Aorta (tissue), 5 donors: ENCODE measurements at regions of chr10 and their contacts with region 1.

Region 1: GRCh38 chr10:125822878-125823662 is at the starts of genes BCCIP and UROS:
- DNase-seq: peak; percentile 95 to 96
- ATAC-seq: peak; percentile 97
- H3K4me3 ChIP-seq: peak within 1 kb of the TSS; percentile 63 to 91
- H3K27ac ChIP-seq: peak within 1 kb of the TSS in 1 of 2 donors; percentile 30
- H3K4me1 ChIP-seq: peaks cover 3 to 16% of the 10 kb centered on the region in 2 donors
- H3K27me3 ChIP-seq: no peaks in the 10 kb centered on the region
- total RNA-seq, gene BCCIP: 30.5 to 36.1 TPM
- total RNA-seq, gene UROS: 23.2 to 29.9 TPM

Region 2: GRCh38 chr10:125629763-125630376 is 193.2 kb before region 1 on chr10:
- intact Hi-C with region 1: no loop called
- DNase-seq: no peak
- ATAC-seq: no peak
- H3K4me3 ChIP-seq: no peak overlapping the region
- H3K27ac ChIP-seq: no peak overlapping the region
- H3K4me1 ChIP-seq: no peaks in the 10 kb centered on the region
- H3K27me3 ChIP-seq: peaks cover 0 to 3% of the 10 kb centered on the region in 2 donors

Region 3: DNA sequence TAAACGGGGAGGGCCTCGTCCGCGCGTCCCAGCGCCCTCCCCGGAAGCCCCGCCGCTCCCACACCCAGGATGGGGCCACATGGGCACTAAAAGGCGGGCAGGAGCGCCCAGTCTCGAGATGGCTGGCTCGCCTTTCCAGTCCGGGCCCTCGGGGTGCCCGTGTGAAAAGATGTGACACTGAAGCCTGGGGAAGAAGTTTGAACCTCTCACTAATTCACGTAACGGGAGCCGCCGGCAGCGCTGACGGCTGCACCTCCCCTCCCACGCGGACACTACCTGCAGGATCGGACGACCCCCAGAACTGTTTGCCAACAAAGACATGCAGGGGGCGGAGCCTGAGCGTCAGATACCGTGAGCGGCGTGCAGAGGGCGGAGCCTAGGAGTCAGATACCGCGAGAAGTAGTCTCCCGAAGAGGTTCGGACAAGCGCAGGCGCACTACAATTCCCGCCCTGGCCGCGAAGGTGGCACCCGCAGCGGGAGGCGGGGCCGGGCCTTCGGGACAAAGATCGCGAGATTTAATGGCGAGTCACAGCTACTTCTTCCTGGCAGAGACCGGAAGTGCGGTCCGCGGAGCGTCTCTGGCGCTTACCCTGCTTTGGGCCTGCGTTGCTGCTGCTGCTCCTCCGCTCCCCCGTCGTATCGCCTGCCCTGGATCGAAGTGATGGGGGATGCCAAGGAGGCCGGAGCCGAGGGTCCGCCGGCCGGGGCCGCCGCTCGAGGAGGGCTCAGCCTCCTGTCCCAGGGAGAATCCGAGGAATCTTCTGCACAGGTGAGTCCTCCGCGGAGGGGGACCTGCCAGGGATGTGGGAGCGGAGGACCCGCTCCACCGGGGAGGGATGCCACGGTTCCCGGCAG is 103.7 kb before region 1 on chr10 and contains the start of gene EDRF1:
- intact Hi-C with region 1: loop called (anchors 5 to 10 kb)
- DNase-seq: peak; percentile 99 to 100
- ATAC-seq: peak; percentile 100
- H3K4me3 ChIP-seq: peak within 1 kb of the TSS; percentile 88 to 96
- H3K27ac ChIP-seq: peak within 1 kb of the TSS; percentile 49 to 50
- H3K4me1 ChIP-seq: no peaks in the 10 kb centered on the region
- H3K27me3 ChIP-seq: no peaks in the 10 kb centered on the region
- total RNA-seq, gene EDRF1: 22.3 to 27.8 TPM

Region 4: GRCh38 chr10:125928928-125929585 is 106.0 kb after region 1 on chr10:
- intact Hi-C with region 1: no loop called
- DNase-seq: no peak
- ATAC-seq: no peak
- H3K4me3 ChIP-seq: no peak overlapping the region
- H3K27ac ChIP-seq: no peak overlapping the region
- H3K4me1 ChIP-seq: no peaks in the 10 kb centered on the region
- H3K27me3 ChIP-seq: no peaks in the 10 kb centered on the region

Region 5: GRCh38 chr10:125967533-125967932 is 144.5 kb after region 1 on chr10:
- intact Hi-C with region 1: no loop called
- DNase-seq: no peak
- ATAC-seq: no peak
- H3K4me3 ChIP-seq: no peak overlapping the region
- H3K27ac ChIP-seq: no peak overlapping the region
- H3K4me1 ChIP-seq: no peaks in the 10 kb centered on the region
- H3K27me3 ChIP-seq: no peaks in the 10 kb centered on the region